Activated T-helper 2 cell treated with anti-CD3 and anti-CD28 coated beads, Interferon-gamma antibody, Interleukin-2, Interleukin-4, amounts not matched to agents 10 μg/mL and 5 μg/mL and 100 μg/mL, durations not matched to agents 14 hours and 24 hours and 36 hours (primary cell): ENCODE measurements at regions of chr6 and their contacts with region 1.

Region 1: GRCh38 chr6:2841264-2842138 is at the start of gene SERPINB1:
- DNase-seq: peak; percentile 76
- H3K4me3 Mint-ChIP-seq: peak within 1 kb of the TSS; percentile 89
- H3K27ac Mint-ChIP-seq: peak within 1 kb of the TSS; percentile 89
- H3K4me1 Mint-ChIP-seq: peaks cover 50% of the 10 kb centered on the region
- H3K27me3 Mint-ChIP-seq: no peaks in the 10 kb centered on the region
- total RNA-seq, gene SERPINB1: 102 and 103 TPM in 2 replicates

Region 2: DNA sequence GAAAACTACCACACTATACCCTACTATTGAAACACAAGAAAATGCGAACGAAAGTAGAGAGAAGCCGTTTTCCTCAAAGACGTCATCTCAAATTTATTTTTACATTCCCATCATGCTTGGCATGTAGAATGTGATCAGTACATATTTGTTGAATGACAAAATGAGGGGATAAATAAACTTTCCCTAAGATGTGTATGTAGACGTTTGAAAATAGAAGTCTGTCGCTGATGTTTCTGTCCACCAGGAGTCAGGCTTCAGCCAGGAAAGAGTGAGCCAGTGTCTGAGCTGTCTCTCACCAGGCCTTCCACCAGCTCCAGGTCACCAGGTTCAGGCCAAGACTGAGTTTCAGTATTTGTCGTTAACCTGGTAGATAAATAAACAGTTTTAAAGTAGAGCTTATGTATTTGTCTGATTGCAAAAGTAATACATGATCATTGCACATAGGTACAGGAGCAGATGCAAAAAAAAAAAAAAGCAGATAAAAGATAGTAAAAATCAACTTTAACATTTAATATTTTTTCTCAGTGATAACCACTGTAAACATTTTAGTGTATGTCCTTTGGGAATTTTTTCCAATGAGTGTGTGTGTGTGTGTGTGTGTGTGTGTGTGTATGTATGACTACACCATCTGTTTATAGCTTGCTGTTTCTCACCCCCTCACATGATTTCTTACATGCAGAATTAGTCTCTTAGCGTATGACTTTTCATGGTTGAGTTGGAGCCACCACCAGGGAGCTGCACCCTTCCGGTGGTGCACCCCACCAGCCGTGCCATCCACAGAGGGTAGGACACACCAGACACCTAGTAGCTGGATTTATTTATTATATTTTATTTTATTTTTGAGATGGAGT is 50.2 kb before region 1 on chr6:
- intact Hi-C with region 1: loop called (anchors 1 kb)
- DNase-seq: peak; percentile 55
- H3K4me3 Mint-ChIP-seq: peak overlapping the region; percentile 41
- H3K27ac Mint-ChIP-seq: peak overlapping the region; percentile 87
- H3K4me1 Mint-ChIP-seq: peaks cover 44% of the 10 kb centered on the region
- H3K27me3 Mint-ChIP-seq: no peaks in the 10 kb centered on the region

Region 3: GRCh38 chr6:2818593-2818992 is 22.9 kb before region 1 on chr6:
- intact Hi-C with region 1: loop called (anchors 2 kb)
- DNase-seq: no peak
- H3K4me3 Mint-ChIP-seq: no peak overlapping the region
- H3K27ac Mint-ChIP-seq: no peak overlapping the region
- H3K4me1 Mint-ChIP-seq: peaks cover 33% of the 10 kb centered on the region
- H3K27me3 Mint-ChIP-seq: no peaks in the 10 kb centered on the region

Region 4: GRCh38 chr6:2853761-2854395 is 12.4 kb after region 1 on chr6:
- intact Hi-C with region 1: loop called (anchors 1 kb)
- DNase-seq: no peak
- H3K4me3 Mint-ChIP-seq: peak overlapping the region; percentile 43
- H3K27ac Mint-ChIP-seq: peak overlapping the region; percentile 99
- H3K4me1 Mint-ChIP-seq: peaks cover 68% of the 10 kb centered on the region
- H3K27me3 Mint-ChIP-seq: no peaks in the 10 kb centered on the region

Region 5: DNA sequence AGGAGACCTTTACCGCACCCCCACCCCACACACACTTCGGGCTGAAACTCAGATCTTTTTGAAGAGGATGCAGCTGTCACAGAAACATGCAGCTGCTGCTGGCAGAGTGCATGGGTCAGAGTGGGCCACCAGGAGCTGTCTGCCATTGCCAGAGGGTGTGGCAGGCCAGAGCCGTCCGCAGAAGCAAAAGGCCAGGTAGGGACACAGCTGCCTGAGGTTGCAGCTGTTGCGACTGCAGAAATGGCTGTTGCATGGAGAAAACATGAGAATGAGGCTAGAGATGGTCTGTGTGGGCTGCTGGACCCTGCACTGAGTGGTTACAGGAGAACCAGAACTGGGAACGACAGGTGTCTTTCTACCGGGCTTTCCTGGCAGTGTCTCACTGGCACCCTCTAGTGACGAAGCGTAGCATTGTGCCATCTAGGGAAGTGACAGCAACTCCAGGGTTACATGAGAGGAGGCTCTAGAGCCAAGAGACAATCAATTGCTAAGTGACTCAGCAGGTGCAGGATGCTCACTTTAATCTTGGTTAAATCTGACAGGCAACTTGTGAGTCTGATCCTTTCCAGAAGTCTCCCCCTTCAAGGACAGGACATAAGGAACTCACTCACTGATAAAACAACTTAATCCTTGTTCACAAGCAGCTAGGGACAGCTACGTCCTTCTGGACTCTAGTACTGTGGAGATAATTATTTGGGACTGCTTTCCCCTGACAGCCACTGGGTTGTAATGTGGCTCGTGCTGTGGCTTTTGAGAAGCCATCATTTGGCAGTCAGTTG is 90.7 kb after region 1 on chr6:
- intact Hi-C with region 1: loop called (anchors 1 kb)
- DNase-seq: peak; percentile 78
- H3K4me3 Mint-ChIP-seq: no peak overlapping the region
- H3K27ac Mint-ChIP-seq: peak overlapping the region; percentile 54
- H3K4me1 Mint-ChIP-seq: peaks cover 23% of the 10 kb centered on the region
- H3K27me3 Mint-ChIP-seq: no peaks in the 10 kb centered on the region

Region 6: DNA sequence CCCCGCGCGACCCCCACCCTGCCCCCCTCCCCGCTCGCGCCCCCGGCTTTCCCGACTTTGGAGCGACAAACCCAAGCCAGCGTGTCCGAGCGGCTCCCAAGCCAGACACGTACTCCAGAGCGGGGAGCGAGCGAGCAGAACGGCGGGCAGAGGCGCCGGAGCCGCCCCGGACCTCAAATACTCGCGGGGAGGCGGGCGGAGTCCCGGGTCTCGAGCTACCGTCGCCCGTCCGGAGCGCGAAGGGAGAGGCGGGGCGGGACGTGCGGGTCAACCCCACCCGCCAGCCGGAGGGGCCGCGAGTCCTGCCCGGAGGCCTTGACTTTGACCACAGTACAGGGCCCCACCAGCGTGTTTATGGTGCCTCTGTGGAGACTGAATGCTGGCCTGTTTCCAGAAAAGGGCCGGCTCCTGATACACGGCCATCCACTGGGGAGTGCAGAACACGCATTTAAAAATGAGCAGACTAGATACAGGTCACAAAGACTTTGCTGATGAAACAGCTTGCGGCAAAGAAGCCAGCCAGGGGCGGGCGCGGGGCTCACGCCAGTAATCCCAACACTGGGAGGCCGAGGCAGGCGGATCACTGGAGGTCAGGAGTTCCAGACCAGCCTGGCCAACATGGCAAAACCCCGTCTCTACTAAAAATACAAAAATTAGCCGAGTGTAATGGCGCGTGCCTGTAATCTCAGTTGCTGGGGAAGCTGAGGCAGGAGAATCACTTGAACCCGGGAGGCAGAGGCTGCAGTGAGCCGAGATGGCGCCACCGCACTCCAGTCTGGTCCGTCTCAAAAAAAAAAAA is 130.1 kb after region 1 on chr6 and contains the start of gene SERPINB6:
- intact Hi-C with region 1: no loop called
- DNase-seq: peak; percentile 22
- H3K4me3 Mint-ChIP-seq: peak within 1 kb of the TSS; percentile 83
- H3K27ac Mint-ChIP-seq: peak within 1 kb of the TSS; percentile 81
- H3K4me1 Mint-ChIP-seq: peaks cover 42% of the 10 kb centered on the region
- H3K27me3 Mint-ChIP-seq: peaks cover 11% of the 10 kb centered on the region
- total RNA-seq, gene SERPINB6: 72.0 and 73.0 TPM in 2 replicates